ENCODE measurements at regions of chr11 and their contacts with region 1.

Region 1: DNA sequence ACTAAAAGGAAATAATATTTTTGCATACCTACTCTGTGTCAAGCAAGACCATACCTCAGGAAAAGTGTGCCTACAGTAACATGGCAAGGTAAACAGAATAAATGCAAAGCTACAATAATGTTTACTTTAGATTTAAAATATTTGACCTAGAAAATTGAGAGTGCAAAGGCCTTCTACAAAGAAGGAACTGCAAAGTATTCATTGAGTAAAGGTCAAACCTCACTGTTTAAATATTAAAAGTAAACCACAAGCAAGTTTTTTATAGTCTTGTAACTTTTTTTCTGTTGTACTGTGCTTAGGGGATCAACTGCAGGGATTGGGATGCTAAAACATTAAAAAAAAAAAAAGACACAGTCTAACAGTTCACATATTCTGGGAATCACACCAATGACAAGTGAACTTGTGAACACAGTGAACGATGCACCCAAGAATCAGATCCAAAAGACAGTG is 48.8 kb downstream of the CWF19L2 start:
- DNase-seq: peak in 1 of 2 experiments; percentile 38
- H3K4me3 ChIP-seq: no peak overlapping the region
- H3K4me3 Mint-ChIP-seq: no peak overlapping the region
- H3K27ac Mint-ChIP-seq: no peak overlapping the region
- H3K4me1 ChIP-seq: peaks cover 26% of the 10 kb centered on the region
- H3K4me1 Mint-ChIP-seq: peaks cover 19% of the 10 kb centered on the region
- H3K27me3 ChIP-seq: no peaks in the 10 kb centered on the region
- H3K27me3 Mint-ChIP-seq: no peaks in the 10 kb centered on the region
- CTCF ChIP-seq: no peak

Region 2: DNA sequence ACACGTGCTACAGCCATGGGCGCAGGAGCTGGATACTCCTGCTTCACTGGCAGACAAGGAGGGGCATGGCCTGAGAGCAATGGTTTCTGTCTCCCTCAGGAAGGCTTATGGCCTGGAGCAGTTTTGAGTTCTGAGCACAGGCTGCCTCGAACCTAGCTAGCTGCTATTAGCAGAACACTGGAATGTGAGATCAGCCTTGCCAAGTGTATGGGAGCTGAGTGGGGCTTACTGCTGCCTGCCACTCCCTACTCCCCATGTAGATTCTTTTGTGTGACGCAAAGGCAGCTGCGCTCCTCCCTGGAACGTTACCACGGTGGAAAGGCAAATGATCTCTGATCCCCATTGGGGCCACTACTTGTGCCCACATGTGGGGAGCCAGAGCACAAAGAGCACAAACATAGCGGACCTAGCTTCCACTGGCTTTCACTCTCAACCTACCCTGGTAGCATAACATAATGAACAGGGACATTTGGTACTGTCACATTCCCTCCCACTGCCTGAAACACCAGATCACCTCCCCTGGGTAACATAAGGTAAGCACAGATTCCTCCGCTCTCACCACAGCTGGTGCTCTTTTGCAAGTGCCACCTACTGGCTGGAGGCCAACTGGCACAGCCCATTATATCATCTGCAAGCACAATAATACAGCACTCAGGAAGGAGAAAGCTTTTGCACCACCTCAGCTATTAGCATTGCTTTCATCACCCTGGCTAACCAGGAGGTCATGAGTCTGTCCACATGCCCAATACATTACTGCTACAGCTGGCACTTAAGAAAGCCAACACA is 305.9 kb before region 1 on chr11:
- CTCF ChIA-PET with region 1: no interaction called
- POLR2A ChIA-PET with region 1: no interaction called
- intact Hi-C with region 1: no loop called
- DNase-seq: peak in 1 of 2 experiments; percentile 13
- H3K4me3 ChIP-seq: no peak overlapping the region
- H3K4me3 Mint-ChIP-seq: no peak overlapping the region
- H3K27ac Mint-ChIP-seq: no peak overlapping the region
- H3K4me1 ChIP-seq: no peaks in the 10 kb centered on the region
- H3K4me1 Mint-ChIP-seq: no peaks in the 10 kb centered on the region
- H3K27me3 ChIP-seq: no peaks in the 10 kb centered on the region
- H3K27me3 Mint-ChIP-seq: peaks cover 5% of the 10 kb centered on the region
- CTCF ChIP-seq: no peak

Region 3: DNA sequence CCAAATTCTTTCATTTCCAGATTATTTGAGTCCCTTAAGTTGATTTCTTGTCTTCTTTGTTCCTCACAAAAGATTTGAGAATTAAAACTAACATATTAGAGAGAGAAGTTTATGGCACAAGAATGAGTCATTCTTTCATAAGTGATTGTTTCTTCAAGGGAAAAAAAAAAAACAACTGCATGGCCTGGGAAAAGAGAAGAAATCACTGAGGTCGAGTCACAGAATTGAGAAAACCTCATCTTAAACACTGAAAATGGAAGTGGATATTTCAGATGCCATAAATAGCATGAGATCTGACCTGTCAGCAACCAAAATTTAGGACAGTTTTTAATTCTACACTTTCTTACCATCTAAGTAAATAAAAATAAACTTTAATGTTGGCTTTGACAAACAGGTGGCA is 38.4 kb before region 1 on chr11:
- CTCF ChIA-PET with region 1: no interaction called
- POLR2A ChIA-PET with region 1: no interaction called
- intact Hi-C with region 1: no loop called
- DNase-seq: no peak
- H3K4me3 ChIP-seq: no peak overlapping the region
- H3K4me3 Mint-ChIP-seq: no peak overlapping the region
- H3K27ac Mint-ChIP-seq: no peak overlapping the region
- H3K4me1 ChIP-seq: no peaks in the 10 kb centered on the region; the same call in 1 of the 2 replicates
- H3K4me1 Mint-ChIP-seq: peaks cover 10% of the 10 kb centered on the region
- H3K27me3 ChIP-seq: no peaks in the 10 kb centered on the region
- H3K27me3 Mint-ChIP-seq: no peaks in the 10 kb centered on the region
- CTCF ChIP-seq: no peak

Region 4: GRCh38 chr11:107385361-107385982 is 23.3 kb before region 1 on chr11:
- CTCF ChIA-PET with region 1: no interaction called
- POLR2A ChIA-PET with region 1: no interaction called
- intact Hi-C with region 1: no loop called
- DNase-seq: peak in 1 of 2 experiments; percentile 27
- H3K4me3 ChIP-seq: no peak overlapping the region
- H3K4me3 Mint-ChIP-seq: no peak overlapping the region
- H3K27ac Mint-ChIP-seq: no peak overlapping the region
- H3K4me1 ChIP-seq: no peaks in the 10 kb centered on the region
- H3K4me1 Mint-ChIP-seq: no peaks in the 10 kb centered on the region
- H3K27me3 ChIP-seq: no peaks in the 10 kb centered on the region
- H3K27me3 Mint-ChIP-seq: no peaks in the 10 kb centered on the region
- CTCF ChIP-seq: no peak

Region 5: DNA sequence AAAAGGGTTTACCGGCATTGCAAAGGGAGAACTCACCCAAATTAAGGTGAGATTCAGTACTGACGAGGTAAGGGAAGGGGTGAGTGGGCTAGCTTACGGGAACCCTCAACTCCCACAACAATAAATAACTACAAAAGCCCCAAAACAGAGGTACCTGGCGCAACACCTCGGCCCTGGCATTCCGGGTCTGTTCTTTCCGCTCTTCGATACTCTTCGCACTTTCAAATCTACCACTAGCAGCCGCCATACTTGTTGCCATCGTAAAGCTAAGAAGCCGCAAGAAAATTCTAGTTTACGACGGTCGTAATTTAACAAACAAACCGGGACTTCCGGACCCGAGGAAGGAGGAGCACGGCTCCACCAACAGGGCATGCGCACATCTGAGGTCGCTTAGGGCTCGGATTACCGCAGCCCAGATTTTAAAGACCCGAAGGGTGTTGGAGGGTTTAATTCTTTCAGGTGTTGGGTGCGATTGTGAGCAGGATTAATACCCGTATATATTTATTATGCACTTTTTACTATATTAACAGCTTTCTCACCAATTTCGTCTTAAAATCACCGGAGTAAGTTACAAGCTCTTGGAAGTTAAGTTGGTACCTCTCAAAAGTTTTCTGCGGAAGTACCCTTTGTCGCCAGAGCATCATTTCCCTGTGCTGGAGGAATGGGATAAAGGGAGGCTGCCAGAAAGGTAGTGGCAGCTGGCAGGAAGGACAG is 48.9 kb after region 1 on chr11 and contains the start of gene CWF19L2:
- CTCF ChIA-PET with region 1: no interaction called
- POLR2A ChIA-PET with region 1: interaction called, 3 read pairs
- intact Hi-C with region 1: loop called (anchors 2 kb)
- DNase-seq: peak; percentile 95 to 96
- H3K4me3 ChIP-seq: peak within 1 kb of the TSS; percentile 73
- H3K4me3 Mint-ChIP-seq: peak within 1 kb of the TSS; percentile 93
- H3K27ac Mint-ChIP-seq: peak within 1 kb of the TSS; percentile 94
- H3K4me1 ChIP-seq: no peaks in the 10 kb centered on the region
- H3K4me1 Mint-ChIP-seq: peaks cover 26% of the 10 kb centered on the region
- H3K27me3 ChIP-seq: no peaks in the 10 kb centered on the region
- H3K27me3 Mint-ChIP-seq: peaks cover 5% of the 10 kb centered on the region
- CTCF ChIP-seq: no peak
- total RNA-seq, gene CWF19L2: 22.9 and 24.1 TPM in 2 replicates